Activated naive CD4-positive, alpha-beta T cell treated with anti-CD3 and anti-CD28 coated beads for 36 hours (primary cell): ENCODE measurements at regions of chr3 and their contacts with region 1.

Region 1: GRCh38 chr3:134299185-134299887 is 48.7 kb upstream of the RYK start:
- DNase-seq: no peak
- H3K4me3 Mint-ChIP-seq: no peak overlapping the region
- H3K27ac Mint-ChIP-seq: no peak overlapping the region
- H3K4me1 Mint-ChIP-seq: no peaks in the 10 kb centered on the region
- H3K27me3 Mint-ChIP-seq: peaks cover 11% of the 10 kb centered on the region

Region 2: DNA sequence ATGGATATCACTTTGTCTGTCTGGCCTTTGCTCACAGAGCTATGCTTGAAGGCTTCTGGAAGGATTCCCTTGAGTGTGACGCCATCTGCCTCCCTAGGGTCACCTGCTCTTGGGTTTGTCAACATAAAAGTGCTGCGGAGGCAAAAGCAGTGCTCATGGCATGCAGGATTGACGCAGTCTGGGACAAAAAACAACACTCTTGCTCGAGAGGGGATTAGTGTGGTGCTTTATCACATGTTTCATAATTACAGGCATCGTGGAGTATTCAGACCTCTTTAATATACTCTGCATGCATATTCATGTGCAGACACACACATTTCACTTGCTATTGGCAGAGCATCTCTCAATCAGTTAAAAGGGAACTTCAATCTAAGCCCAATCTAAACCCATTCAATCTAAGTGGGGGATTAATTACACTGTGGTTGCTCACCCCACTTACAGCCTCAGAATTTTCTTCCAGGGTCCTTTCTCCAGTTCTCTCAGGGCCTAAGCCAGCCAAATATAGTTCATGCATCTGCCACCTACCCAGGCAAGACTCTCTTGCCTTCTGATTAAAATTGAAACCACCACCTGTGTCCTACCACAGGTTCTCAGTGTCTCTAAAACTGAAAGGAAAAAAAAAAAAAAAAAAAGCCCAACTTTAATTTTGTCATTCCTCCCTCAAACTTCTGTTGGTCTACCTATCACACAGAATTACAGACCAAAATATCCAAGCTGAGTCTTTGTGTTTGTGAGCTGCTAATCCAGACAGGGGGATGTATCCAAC is 823.9 kb before region 1 on chr3:
- CTCF ChIA-PET with region 1: no interaction called
- intact Hi-C with region 1: no loop called
- DNase-seq: peak; percentile 46
- H3K4me3 Mint-ChIP-seq: no peak overlapping the region
- H3K27ac Mint-ChIP-seq: peak overlapping the region; percentile 59
- H3K4me1 Mint-ChIP-seq: peaks cover 48% of the 10 kb centered on the region
- H3K27me3 Mint-ChIP-seq: no peaks in the 10 kb centered on the region

Region 3: GRCh38 chr3:133661454-133662277 is 637.7 kb before region 1 on chr3 and contains the start of gene TOPBP1:
- CTCF ChIA-PET with region 1: no interaction called
- intact Hi-C with region 1: loop called (anchors 10 kb)
- DNase-seq: peak; percentile 94
- H3K4me3 Mint-ChIP-seq: peak within 1 kb of the TSS; percentile 98
- H3K27ac Mint-ChIP-seq: peak within 1 kb of the TSS; percentile 98
- H3K4me1 Mint-ChIP-seq: peaks cover 28% of the 10 kb centered on the region
- H3K27me3 Mint-ChIP-seq: no peaks in the 10 kb centered on the region
- total RNA-seq, gene TOPBP1: 65.4 to 65.8 TPM

Region 4: DNA sequence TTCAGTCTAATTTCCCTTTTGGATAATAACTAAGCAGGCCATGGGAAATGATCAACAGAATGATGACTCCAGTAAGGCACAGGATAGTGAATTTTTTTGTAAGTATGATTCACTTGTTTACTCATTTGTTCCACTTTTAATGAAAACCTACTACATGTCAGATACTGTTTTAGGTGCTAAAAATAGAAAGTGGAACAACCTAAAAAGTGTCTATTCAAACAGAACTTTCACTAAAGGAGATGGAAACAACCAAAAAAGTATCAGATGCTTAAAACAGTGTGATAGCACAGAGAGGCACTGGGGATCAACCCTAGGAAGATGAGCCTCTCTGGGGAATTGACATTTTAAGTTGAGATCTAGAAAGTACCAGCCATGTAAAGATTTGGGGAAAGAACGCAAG is 59.8 kb before region 1 on chr3:
- CTCF ChIA-PET with region 1: interaction called, 7 read pairs
- intact Hi-C with region 1: loop called (anchors 1 kb)
- DNase-seq: peak; percentile 45
- H3K4me3 Mint-ChIP-seq: peak overlapping the region; percentile 30
- H3K27ac Mint-ChIP-seq: peak overlapping the region; percentile 88
- H3K4me1 Mint-ChIP-seq: peaks cover 94% of the 10 kb centered on the region
- H3K27me3 Mint-ChIP-seq: no peaks in the 10 kb centered on the region

Region 5: DNA sequence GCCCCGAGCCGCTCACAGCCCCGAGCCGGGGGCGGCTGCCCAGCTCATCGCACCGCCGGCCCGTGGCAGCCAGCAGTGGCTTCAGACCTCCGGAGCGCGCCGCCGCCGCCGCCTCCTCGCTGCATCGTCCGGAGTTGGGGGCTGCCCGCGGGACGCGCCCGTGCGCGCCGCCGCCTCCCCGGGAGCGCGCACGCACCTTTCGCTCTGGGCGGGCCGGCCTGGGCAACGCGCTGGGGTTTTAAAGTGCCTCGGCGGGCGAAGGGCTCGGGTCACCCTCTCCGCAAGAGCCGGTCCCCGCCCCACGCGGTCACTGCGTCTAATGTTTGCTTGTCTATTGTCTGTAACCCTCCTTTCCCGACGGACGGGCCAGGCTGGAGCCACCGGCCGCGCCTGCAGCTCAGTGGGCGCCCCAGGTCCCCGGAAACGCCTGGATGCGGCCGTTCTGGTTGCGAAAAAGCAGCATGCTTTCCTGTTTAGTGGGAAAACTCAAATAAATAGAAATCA is 48.6 kb before region 1 on chr3 and contains the start of gene RYK:
- CTCF ChIA-PET with region 1: interaction called, 3 read pairs
- intact Hi-C with region 1: loop called (anchors 1 kb)
- DNase-seq: peak; percentile 70
- H3K4me3 Mint-ChIP-seq: peak within 1 kb of the TSS; percentile 95
- H3K27ac Mint-ChIP-seq: peak within 1 kb of the TSS; percentile 90
- H3K4me1 Mint-ChIP-seq: peaks cover 57% of the 10 kb centered on the region
- H3K27me3 Mint-ChIP-seq: no peaks in the 10 kb centered on the region
- total RNA-seq, gene RYK: 19.5 to 19.7 TPM